ENCODE measurements at regions of chr19 and their contacts with region 1.

Region 1: GRCh38 chr19:36214386-36215275 is at the starts of genes ZNF146 and ZNF565:
- DNase-seq: peak; percentile 99
- H3K4me3 Mint-ChIP-seq: no peak within 1 kb of the TSS
- H3K27ac Mint-ChIP-seq: no peak within 1 kb of the TSS
- H3K4me1 Mint-ChIP-seq: peaks cover 5% of the 10 kb centered on the region
- H3K27me3 Mint-ChIP-seq: no peaks in the 10 kb centered on the region
- total RNA-seq, gene ZNF146: 84.6 and 90.3 TPM in 2 replicates
- total RNA-seq, gene ZNF565: 1.6 and 2.2 TPM in 2 replicates

Region 2: DNA sequence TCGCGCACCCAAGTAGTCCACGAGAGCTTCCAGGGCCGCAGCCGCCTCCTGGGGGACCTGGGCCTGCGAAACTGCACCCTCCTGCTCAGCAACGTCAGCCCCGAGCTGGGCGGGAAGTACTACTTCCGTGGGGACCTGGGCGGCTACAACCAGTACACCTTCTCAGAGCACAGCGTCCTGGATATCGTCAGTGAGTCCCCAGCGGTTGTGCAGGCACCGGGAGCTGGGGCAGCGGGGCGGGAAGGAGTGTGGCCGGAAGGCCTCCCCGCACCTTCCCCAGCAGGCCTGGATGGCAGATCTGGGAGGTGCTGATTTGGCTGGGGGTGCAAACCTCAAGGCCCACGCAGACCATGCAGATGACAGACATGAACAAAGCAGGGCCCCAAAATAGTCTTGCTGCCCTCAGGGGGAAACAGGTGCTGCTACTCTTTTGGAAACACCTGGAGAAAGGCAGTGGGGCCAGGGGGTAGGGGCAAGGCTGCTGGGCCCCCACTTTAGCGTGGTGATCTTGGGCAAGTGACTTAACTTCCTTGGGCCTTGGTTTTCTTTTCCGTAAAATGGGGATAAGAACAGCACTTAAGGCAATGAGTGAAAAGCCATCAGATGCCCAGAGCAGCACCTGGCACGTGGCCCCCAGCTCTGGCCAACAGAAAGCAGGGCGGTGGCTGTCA is 918.7 kb before region 1 on chr19:
- intact Hi-C with region 1: no loop called
- DNase-seq: peak; percentile 80
- H3K4me3 Mint-ChIP-seq: no peak overlapping the region
- H3K27ac Mint-ChIP-seq: no peak overlapping the region
- H3K4me1 Mint-ChIP-seq: peaks cover 7% of the 10 kb centered on the region
- H3K27me3 Mint-ChIP-seq: peaks cover 4% of the 10 kb centered on the region

Region 3: DNA sequence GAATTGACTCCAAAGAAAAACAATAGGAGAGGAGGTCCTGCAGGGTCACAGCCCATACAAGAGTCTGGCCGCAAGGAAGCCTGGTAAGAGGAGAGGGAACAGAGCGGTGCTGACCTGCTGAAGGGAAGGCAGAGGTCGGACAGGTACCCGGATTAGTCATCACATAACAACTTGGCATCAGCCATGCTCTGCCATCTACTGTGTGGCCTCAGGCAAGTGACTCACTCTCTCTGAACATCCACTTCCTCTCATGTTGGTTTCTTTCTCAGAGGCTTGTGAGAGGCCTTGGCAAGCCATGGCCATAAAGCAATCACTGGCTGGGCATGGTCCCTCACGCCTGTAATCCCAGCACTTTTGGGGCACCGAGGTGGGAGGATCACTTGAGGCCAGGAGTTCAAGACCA is 82.1 kb before region 1 on chr19:
- intact Hi-C with region 1: loop called (anchors 2 kb)
- DNase-seq: peak; percentile 76
- H3K4me3 Mint-ChIP-seq: peak overlapping the region; percentile 24
- H3K27ac Mint-ChIP-seq: peak overlapping the region; percentile 54
- H3K4me1 Mint-ChIP-seq: peaks cover 25% of the 10 kb centered on the region
- H3K27me3 Mint-ChIP-seq: no peaks in the 10 kb centered on the region

Region 4: DNA sequence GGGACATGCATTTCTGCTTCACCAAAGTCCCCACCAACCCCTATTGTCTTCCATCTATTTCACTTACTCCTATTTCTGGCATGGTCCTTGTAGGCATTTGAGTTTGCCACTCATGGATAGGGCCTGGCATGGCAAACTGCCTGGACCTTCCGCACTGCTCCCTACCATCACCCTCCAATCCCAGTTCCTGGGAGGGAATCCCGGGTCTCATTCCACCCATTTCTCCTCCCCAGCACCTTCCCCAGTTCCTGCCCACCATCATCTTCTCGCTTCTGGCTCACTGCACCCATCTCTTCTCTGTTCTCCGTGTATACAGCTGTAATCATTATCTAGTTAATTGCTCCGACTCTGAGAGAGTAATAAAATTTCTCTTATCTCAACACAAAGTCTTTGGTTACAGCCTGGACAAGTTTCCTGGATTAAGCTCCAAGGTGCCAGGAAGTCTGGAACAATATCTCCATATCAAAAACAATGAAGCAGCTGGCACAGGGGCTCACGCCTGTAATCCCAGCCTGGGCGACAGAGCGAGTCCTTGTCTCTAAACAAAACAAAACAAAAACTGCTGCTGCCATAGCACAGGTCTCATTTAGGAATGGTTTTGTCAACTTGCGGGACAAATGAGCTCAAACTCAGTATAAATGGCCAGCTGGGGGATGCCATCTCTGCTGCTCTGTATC is 45.4 kb before region 1 on chr19:
- intact Hi-C with region 1: no loop called
- DNase-seq: no peak
- H3K4me3 Mint-ChIP-seq: no peak overlapping the region
- H3K27ac Mint-ChIP-seq: no peak overlapping the region
- H3K4me1 Mint-ChIP-seq: peaks cover 2% of the 10 kb centered on the region
- H3K27me3 Mint-ChIP-seq: no peaks in the 10 kb centered on the region

Region 5: GRCh38 chr19:36489118-36489919 is 274.7 kb after region 1 on chr19 and contains the start of gene ZNF566:
- intact Hi-C with region 1: loop called (anchors 1 kb)
- DNase-seq: peak; percentile 97
- H3K4me3 Mint-ChIP-seq: peak within 1 kb of the TSS; percentile 99
- H3K27ac Mint-ChIP-seq: peak within 1 kb of the TSS; percentile 99
- H3K4me1 Mint-ChIP-seq: peaks cover 23% of the 10 kb centered on the region
- H3K27me3 Mint-ChIP-seq: no peaks in the 10 kb centered on the region
- total RNA-seq, gene ZNF566: 7.2 and 8.5 TPM in 2 replicates

Region 6: GRCh38 chr19:36605101-36605876 is 390.7 kb after region 1 on chr19 and contains the start of gene ZNF382:
- intact Hi-C with region 1: loop called (anchors 1 kb)
- DNase-seq: peak; percentile 96
- H3K4me3 Mint-ChIP-seq: peak within 1 kb of the TSS; percentile 89
- H3K27ac Mint-ChIP-seq: peak within 1 kb of the TSS; percentile 98
- H3K4me1 Mint-ChIP-seq: peaks cover 22% of the 10 kb centered on the region
- H3K27me3 Mint-ChIP-seq: no peaks in the 10 kb centered on the region
- total RNA-seq, gene ZNF382: 9.5 and 13.2 TPM in 2 replicates

Region 7: GRCh38 chr19:36772311-36773222 is 557.9 kb after region 1 on chr19 and contains the start of gene ZNF850:
- intact Hi-C with region 1: loop called (anchors 10 kb)
- DNase-seq: peak; percentile 98
- H3K4me3 Mint-ChIP-seq: peak within 1 kb of the TSS; percentile 95
- H3K27ac Mint-ChIP-seq: peak within 1 kb of the TSS; percentile 89
- H3K4me1 Mint-ChIP-seq: peaks cover 21% of the 10 kb centered on the region
- H3K27me3 Mint-ChIP-seq: no peaks in the 10 kb centered on the region
- total RNA-seq, gene ZNF850: 3.2 and 3.8 TPM in 2 replicates

Region 8: GRCh38 chr19:37077934-37078725 is 863.5 kb after region 1 on chr19 and contains the start of gene ZNF420:
- intact Hi-C with region 1: loop called (anchors 10 kb)
- DNase-seq: peak; percentile 96
- H3K4me3 Mint-ChIP-seq: peak within 1 kb of the TSS; percentile 91
- H3K27ac Mint-ChIP-seq: peak within 1 kb of the TSS; percentile 92
- H3K4me1 Mint-ChIP-seq: peaks cover 17% of the 10 kb centered on the region
- H3K27me3 Mint-ChIP-seq: no peaks in the 10 kb centered on the region
- total RNA-seq, gene ZNF420: 9.8 and 11.9 TPM in 2 replicates

Region 9: GRCh38 chr19:37779127-37780005 is 1564.7 kb after region 1 on chr19 and contains the start of gene ZNF573:
- intact Hi-C with region 1: loop called (anchors 10 kb)
- DNase-seq: peak; percentile 93
- H3K4me3 Mint-ChIP-seq: peak within 1 kb of the TSS; percentile 96
- H3K27ac Mint-ChIP-seq: peak within 1 kb of the TSS; percentile 92
- H3K4me1 Mint-ChIP-seq: peaks cover 11% of the 10 kb centered on the region
- H3K27me3 Mint-ChIP-seq: no peaks in the 10 kb centered on the region
- total RNA-seq, gene ZNF573: 6.5 and 6.8 TPM in 2 replicates